ENCODE measurements at regions of chr7 and their contacts with region 1.

Region 1: DNA sequence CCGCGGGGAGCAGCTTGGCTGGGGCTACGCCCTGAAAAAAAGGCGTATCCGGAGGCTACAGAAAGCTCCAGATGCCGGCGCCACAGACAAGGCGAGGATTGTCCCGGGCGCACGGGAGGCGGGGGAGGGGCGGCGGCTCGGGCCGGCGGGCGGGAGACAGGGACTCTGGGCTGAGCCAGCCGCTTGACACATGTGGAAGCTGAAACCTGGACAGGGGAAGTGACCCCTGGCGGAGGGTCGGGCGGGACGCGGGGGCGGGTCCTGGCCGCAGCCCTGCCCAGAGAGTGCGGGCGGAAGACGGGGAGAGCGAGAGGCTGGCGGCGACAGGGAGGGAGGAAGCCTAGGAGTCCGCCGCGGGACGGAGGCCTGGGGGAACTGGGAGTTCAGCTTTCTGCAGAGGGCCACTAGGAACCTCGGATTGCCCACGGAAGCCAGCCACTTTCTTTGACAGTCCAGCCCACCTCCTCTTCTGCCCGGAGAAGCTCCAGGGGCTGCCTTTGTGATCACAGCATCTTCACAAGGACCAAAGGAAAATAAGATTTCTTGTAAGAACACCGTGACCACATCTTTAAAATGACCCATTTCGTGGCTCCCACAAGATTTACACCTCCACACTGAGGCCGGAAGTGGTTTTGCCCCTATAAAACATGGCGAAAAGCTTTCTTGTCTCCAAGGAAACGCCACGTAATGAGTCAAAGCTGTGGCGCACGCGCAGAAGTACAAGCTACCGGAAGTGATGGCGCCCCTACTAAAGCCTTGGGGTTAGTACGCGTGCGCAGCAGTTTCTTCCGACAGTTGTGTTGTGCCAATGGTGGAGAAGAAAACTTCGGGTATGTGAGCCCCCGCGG is at the starts of genes PLOD3 and ZNHIT1:
- DNase-seq: peak; percentile 88 to 97 (median 94)
- H3K4me3 ChIP-seq: peak within 1 kb of the TSS; percentile 54 to 99 (median 88)
- H3K27ac ChIP-seq: peak within 1 kb of the TSS in 58 of 59 donors; percentile 75 to 99 (median 95)
- H3K27me3 ChIP-seq: no peaks in the 10 kb centered on the region
- CTCF ChIP-seq: peak in 37 of 56 donors; percentile 6 to 63 (median 31)
- total RNA-seq, gene PLOD3: 26.7 to 217 (median 56.2) TPM
- total RNA-seq, gene ZNHIT1: 36.5 to 63.3 (median 50.0) TPM

Region 2: DNA sequence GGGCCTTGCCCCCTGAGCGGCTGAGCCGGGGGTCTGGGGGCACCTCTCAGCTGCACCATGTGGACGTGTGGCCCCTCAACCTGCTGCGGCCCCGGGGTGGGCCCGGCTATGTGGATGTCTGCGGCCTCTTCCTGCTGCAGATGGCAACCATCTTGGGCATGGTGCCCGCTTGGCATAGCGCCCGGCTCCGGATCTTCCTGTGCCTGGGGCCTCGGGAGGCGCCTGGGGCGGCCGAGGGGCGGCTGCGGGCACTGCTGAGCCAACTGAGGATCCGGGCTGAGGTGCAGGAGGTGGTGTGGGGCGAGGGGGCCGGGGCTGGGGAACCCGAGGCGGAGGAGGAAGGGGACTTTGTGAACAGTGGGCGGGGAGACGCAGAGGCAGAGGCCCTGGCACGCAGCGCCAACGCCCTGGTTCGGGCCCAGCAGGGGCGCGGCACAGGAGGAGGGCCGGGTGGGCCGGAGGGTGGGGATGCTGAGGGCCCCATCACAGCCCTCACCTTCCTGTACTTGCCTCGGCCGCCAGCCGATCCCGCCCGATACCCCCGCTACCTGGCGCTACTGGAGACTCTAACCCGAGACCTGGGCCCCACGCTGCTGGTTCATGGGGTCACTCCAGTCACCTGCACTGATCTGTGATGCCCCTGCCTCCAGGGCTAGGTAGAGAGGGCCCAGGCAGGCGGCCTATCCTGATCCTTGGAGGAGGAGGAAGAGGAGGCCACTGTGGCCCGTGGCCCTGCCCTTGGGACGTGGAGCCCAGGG is 351.5 kb before region 1 on chr7:
- intact Hi-C with region 1: loop called in 1 of 2 experiments (anchors 2 kb)
- DNase-seq: peak; percentile 86 to 95 (median 90)
- H3K4me3 ChIP-seq: peak overlapping the region; percentile 42 to 86 (median 70)
- H3K27ac ChIP-seq: peak overlapping the region; percentile 84 to 99 (median 97)
- H3K27me3 ChIP-seq: no peaks in the 10 kb centered on the region
- CTCF ChIP-seq: peak in 1 of 56 donors; percentile 15

Region 3: GRCh38 chr7:101153969-101154692 is 63.5 kb before region 1 on chr7 and contains the start of gene AP1S1:
- intact Hi-C with region 1: loop called in 1 of 2 experiments (anchors 2 kb)
- DNase-seq: peak; percentile 88 to 96 (median 92)
- H3K4me3 ChIP-seq: peak within 1 kb of the TSS; percentile 66 to 94 (median 83)
- H3K27ac ChIP-seq: peak within 1 kb of the TSS in 48 of 59 donors; percentile 1 to 90 (median 64)
- H3K27me3 ChIP-seq: no peaks in the 10 kb centered on the region
- CTCF ChIP-seq: peak in 22 of 56 donors; percentile 2 to 48 (median 20)
- total RNA-seq, gene AP1S1: 39.7 to 176 (median 100.0) TPM

Region 4: DNA sequence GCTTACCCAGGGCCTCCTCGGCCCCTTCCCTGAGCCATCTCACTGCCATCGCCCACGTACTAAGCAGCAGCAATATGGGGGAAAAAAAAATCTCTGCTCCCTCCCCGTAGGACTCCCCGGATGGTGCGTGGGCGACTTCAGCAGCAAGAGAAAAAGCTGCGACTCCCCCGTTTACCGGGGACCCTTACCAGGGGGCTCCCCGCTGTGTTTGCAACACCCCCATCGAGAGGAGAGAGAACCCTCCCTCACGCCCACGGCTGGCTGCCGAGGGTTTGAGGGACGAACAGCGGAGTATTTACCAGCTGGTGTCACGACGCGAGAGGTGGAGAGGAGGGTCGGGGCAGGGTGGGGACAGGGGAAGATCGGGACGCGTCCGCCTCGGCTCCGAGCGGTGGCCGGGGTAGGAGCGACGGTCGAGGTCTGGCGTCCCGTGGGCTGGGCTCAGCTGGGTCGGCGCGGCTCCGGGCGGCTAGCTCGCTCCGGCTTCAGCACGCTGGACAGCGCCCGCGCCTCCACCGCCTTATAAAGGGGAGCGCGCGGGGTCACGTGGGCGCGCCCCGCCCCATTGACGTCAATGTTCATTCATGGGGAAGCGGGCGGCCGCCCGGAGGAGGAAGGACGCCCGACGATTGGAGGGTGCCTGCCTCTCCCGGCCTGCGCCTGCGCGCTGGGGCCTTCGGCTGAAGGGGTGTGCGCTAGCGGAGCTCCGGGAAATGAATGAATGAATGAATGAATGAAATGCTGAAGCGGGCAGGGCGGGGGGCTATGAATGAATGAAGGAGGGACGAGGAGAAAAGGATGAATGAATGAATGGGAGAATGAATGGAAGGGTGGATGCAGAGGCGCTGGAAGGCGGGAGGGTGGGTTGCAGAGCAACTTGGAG is 52.3 kb before region 1 on chr7 and contains the start of gene VGF:
- intact Hi-C with region 1: loop called in 1 of 2 experiments (anchors 5 kb)
- DNase-seq: peak; percentile 81 to 92 (median 89)
- H3K4me3 ChIP-seq: peak within 1 kb of the TSS in 57 of 59 donors; percentile 19 to 66 (median 47)
- H3K27ac ChIP-seq: peak within 1 kb of the TSS in 31 of 59 donors; percentile 2 to 89 (median 44)
- H3K27me3 ChIP-seq: peaks cover 0 to 84% (median 62%) of the 10 kb centered on the region in 45 donors
- CTCF ChIP-seq: peak in 29 of 56 donors; percentile 1 to 48 (median 25)
- total RNA-seq, gene VGF: 5.8 to 171 (median 31.4) TPM

Region 5: GRCh38 chr7:101244375-101245146 is 26.9 kb after region 1 on chr7 and contains the start of gene FIS1:
- intact Hi-C with region 1: loop called (anchors 1 to 2 kb)
- DNase-seq: peak; percentile 89 to 96 (median 94)
- H3K4me3 ChIP-seq: peak within 1 kb of the TSS; percentile 63 to 100 (median 90)
- H3K27ac ChIP-seq: peak within 1 kb of the TSS; percentile 95 to 100 (median 100)
- H3K27me3 ChIP-seq: no peaks in the 10 kb centered on the region
- CTCF ChIP-seq: peak in 53 of 56 donors; percentile 73 to 96 (median 89)
- total RNA-seq, gene FIS1: 134 to 359 (median 209) TPM

Region 6: GRCh38 chr7:101287032-101287431 is 69.4 kb after region 1 on chr7:
- intact Hi-C with region 1: loop called in 1 of 2 experiments (anchors 10 kb)
- DNase-seq: no peak
- H3K4me3 ChIP-seq: no peak overlapping the region
- H3K27ac ChIP-seq: no peak overlapping the region
- H3K27me3 ChIP-seq: peaks cover 0 to 13% (median 4%) of the 10 kb centered on the region in 45 donors
- CTCF ChIP-seq: no peak

Measured in dorsolateral prefrontal cortex (tissue), 120 donors.